ENCODE measurements at regions of chr7 and their contacts with region 1.

Region 1: GRCh38 chr7:129914536-129915272 is 38.1 kb downstream of the UBE2H start:
- DNase-seq: no peak
- ATAC-seq: peak in 4 of 8 donors; percentile 18 to 47 (median 35)
- H3K4me3 ChIP-seq: no peak overlapping the region
- H3K27ac ChIP-seq: peak overlapping the region in 7 of 10 donors; percentile 3 to 79 (median 18)
- H3K4me1 ChIP-seq: peaks cover 5 to 72% (median 58%) of the 10 kb centered on the region in 9 donors
- H3K27me3 ChIP-seq: no peaks in the 10 kb centered on the region
- CTCF ChIP-seq: no peak

Region 2: GRCh38 chr7:129875745-129876411 is 38.8 kb before region 1 on chr7:
- intact Hi-C with region 1: loop called in 2 of 10 experiments (anchors 5 kb)
- DNase-seq: no peak
- ATAC-seq: peak in 7 of 8 donors; percentile 25 to 68 (median 52)
- H3K4me3 ChIP-seq: no peak overlapping the region
- H3K27ac ChIP-seq: peak overlapping the region in 5 of 10 donors; percentile 25 to 56 (median 50)
- H3K4me1 ChIP-seq: peaks cover 5 to 66% (median 41%) of the 10 kb centered on the region in 9 donors
- H3K27me3 ChIP-seq: no peaks in the 10 kb centered on the region
- CTCF ChIP-seq: no peak

Region 3: DNA sequence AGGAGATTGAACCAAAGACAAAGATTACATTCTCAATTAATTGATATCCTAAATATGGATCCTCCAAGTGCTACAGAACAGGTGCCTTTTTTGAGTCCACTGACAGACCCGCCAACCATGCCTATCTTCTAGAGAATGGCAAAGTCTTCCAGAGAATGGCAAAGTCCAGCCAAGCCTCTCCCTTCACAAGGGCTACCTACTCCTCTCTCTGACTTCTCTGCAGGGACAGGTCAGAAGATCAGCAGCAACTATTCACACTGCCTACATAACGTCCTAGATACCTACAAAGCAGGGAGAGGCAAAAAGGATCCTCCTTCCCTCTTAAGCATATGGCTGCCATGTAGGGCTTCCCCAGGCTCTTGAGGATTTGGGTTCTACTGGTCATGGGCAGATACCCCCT is 25.6 kb after region 1 on chr7:
- intact Hi-C with region 1: loop called in 1 of 10 experiments (anchors 1 kb)
- DNase-seq: no peak
- ATAC-seq: peak in 6 of 8 donors; percentile 14 to 51 (median 32)
- H3K4me3 ChIP-seq: no peak overlapping the region
- H3K27ac ChIP-seq: peak overlapping the region in 5 of 10 donors; percentile 19 to 70 (median 26)
- H3K4me1 ChIP-seq: peaks cover 0 to 51% (median 24%) of the 10 kb centered on the region in 9 donors
- H3K27me3 ChIP-seq: no peaks in the 10 kb centered on the region
- CTCF ChIP-seq: no peak

Region 4: DNA sequence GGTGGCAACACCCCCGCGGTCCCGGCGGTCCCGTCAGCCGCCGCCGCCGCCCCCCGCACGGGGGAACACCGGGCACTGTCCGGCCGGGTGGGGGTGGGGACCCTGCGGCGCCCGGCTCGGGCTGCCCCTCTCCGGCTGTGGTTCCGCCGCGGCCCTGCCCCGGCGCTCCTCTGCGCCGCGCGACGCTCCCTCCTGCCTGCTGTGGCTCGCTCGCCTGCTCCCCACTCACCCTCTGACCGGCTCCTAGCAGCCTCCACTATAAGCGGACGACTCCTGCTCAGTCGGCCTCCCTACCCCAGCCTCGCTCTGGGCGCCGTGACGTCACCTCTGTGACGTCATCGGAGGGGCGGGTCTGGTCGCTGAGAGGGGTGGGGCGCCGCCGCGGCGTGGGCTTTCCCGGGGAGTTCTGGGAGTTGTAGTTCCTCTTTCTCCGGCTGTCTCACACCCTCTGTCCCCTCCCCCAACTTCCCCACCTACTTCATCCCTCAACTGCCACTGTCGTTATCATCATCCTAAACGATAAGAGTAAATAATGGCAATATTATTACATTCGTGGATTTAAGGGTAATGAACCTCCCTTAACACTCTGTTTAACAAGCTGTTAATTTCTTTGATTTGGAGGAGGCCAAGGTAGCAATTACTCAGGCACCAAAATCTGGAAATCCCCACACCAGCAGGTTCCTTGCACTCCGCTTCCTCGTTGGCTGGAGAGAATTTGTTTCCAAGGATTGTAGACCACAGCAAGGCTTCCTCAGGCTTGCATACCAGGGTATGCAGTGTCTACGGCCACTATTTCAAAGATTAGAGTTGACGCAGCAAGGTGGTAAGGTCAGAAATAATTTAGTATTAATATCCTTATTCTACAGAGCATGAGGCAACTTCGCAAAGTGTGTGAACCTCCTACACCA is 38.2 kb after region 1 on chr7 and contains the start of gene UBE2H:
- intact Hi-C with region 1: loop called in 1 of 10 experiments (anchors 5 kb)
- DNase-seq: peak; percentile 92 to 94
- ATAC-seq: peak; percentile 83 to 93 (median 92)
- H3K4me3 ChIP-seq: peak within 1 kb of the TSS; percentile 80 to 99 (median 89)
- H3K27ac ChIP-seq: peak within 1 kb of the TSS; percentile 90 to 99 (median 96)
- H3K4me1 ChIP-seq: peaks cover 0 to 38% (median 24%) of the 10 kb centered on the region in 9 donors
- H3K27me3 ChIP-seq: no peaks in the 10 kb centered on the region
- CTCF ChIP-seq: no peak
- total RNA-seq, gene UBE2H: 73.5 to 222 (median 170) TPM

Measured in heart right ventricle (tissue), 16 donors.